PC-3 (cell line): ENCODE measurements at regions of chr5 and their contacts with region 1.

Region 1: DNA sequence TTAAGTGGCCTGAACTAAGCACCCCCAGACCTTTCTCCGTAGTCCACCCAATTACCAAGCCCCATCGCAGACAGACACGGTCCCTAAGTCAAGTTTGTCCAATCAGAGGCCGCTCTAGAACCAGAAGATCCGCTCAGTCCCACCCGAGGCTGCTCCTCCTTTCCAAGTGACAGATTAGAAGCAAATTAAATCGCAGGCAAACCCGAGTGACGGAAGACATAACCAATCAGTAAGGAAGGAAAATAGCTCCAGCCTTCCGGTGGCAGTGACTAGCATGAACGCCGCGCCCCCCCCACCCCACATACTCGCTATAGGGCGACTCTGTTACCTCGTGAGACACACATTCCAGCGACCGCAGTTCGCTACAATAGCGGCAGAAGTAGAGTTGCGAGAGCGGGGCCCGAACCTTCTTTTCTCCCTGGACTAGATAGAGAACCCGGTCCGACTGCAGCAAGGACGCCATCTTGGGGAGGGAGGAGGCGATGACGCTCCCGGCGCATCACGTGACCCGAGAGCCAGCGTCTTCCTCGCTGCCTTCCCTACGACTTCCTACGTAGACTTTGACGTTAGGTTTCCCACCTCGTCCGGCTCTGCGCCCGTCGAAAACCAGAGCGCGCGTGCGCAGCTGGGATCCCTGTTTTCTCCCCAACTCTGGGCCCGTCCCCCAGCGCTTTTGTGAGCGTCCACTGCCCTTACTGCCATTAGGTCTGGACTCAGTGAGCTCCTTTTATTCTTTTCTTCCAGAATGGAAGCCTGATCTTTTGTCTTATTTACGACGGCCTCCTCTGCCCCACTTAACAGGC is at the start of gene DCTN4:
- DNase-seq: peak; percentile 97
- ATAC-seq: peak; percentile 94
- H3K4me3 ChIP-seq: peak within 1 kb of the TSS; percentile 84
- H3K27ac ChIP-seq: peak within 1 kb of the TSS; percentile 87
- H3K4me1 ChIP-seq: peaks cover 29% of the 10 kb centered on the region
- H3K27me3 ChIP-seq: no peaks in the 10 kb centered on the region
- CTCF ChIP-seq: no peak
- total RNA-seq, gene DCTN4: 40.5 and 45.0 TPM in 2 replicates

Region 2: DNA sequence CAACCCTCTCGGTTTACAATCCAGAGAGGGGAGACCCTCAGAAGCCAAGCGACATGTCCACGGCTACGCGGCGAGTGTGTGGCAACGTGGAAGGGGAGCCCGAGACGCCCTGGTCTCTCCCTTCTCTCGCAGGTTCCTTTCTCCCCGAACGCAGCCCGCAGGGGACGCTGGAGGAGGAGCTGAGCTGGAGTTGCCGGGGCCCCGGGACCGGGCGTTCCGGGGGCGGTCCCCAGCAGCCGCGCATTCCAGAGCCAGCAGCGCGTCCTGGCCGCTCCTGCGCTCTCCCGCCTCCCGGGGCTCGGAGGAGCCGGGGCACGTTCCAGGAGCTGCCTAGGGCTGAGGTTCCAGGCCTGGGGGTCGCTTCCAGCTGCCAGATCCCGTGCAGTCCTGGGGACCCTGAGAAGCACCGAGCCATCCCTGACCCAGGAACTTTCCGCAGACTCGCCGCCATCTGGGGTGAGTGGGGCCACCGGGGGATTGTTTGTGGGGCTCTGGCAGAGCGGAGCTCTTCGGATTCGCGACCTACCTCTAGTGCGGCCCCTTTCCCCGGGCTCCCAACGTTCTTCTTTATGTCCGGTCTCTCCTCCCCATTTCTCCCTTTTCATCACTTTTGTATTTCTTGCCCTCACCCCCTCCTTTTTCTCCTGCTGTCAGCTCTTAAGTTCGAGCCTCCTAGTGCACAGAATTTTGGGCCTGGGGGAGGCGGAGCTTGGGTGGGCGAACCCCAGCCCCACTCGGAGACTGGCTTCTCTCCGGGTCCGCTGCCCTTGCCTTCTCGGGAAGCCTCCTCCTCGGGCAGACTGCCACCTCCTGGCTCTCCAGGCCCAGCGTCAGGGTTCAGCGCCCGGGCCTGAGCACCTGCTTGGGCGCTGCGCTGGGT is 20.0 kb after region 1 on chr5 and contains the start of gene SMIM3:
- CTCF ChIA-PET with region 1: interaction called, 3 read pairs
- POLR2A ChIA-PET with region 1: interaction called, 3 read pairs
- intact Hi-C with region 1: loop called (anchors 1 kb)
- DNase-seq: peak; percentile 72
- ATAC-seq: peak; percentile 76
- H3K4me3 ChIP-seq: peak within 1 kb of the TSS; percentile 91
- H3K27ac ChIP-seq: no peak within 1 kb of the TSS
- H3K4me1 ChIP-seq: peaks cover 59% of the 10 kb centered on the region
- H3K27me3 ChIP-seq: no peaks in the 10 kb centered on the region
- CTCF ChIP-seq: peak; percentile 63
- total RNA-seq, gene SMIM3: 11.3 and 15.6 TPM in 2 replicates

Region 3: GRCh38 chr5:150862070-150862469 is 103.3 kb after region 1 on chr5:
- CTCF ChIA-PET with region 1: no interaction called
- POLR2A ChIA-PET with region 1: no interaction called
- intact Hi-C with region 1: no loop called
- DNase-seq: no peak
- ATAC-seq: no peak
- H3K4me3 ChIP-seq: no peak overlapping the region
- H3K27ac ChIP-seq: no peak overlapping the region
- H3K4me1 ChIP-seq: no peaks in the 10 kb centered on the region
- H3K27me3 ChIP-seq: no peaks in the 10 kb centered on the region
- CTCF ChIP-seq: no peak